GM12878 (cell line): ENCODE measurements at regions of chr14 and their contacts with region 1.

Region 1: GRCh38 chr14:41609704-41610183 is 3.1 kb downstream of the LRFN5 start:
- DNase-seq: no peak
- ATAC-seq: peak; percentile 56
- H3K4me3 ChIP-seq: no peak overlapping the region
- H3K27ac ChIP-seq: no peak overlapping the region
- H3K4me1 ChIP-seq: no peaks in the 10 kb centered on the region
- H3K27me3 ChIP-seq: peaks cover 10 to 13% of the 10 kb centered on the region in 2 experiments
- CTCF ChIP-seq: peak in 1 of 3 experiments; percentile 5; a peak in 1 of 6 replicates
- EP300 ChIP-seq: no peak
- POLR2A ChIP-seq: no peak
- RAD21 ChIP-seq: no peak

Region 2: GRCh38 chr14:39988939-39989338 is 1620.8 kb before region 1 on chr14:
- CTCF ChIA-PET with region 1: no interaction called
- POLR2A ChIA-PET with region 1: no interaction called
- RAD21 ChIA-PET with region 1: no interaction called
- SMC1A ChIA-PET with region 1: no interaction called
- in situ Hi-C with region 1: loop called (anchors 25 kb)
- intact Hi-C with region 1: no loop called
- DNase-seq: no peak
- ATAC-seq: peak; percentile 61; the same call in 2 of the 3 replicates
- H3K4me3 ChIP-seq: no peak overlapping the region
- H3K27ac ChIP-seq: no peak overlapping the region
- H3K4me1 ChIP-seq: no peaks in the 10 kb centered on the region
- H3K27me3 ChIP-seq: no peaks in the 10 kb centered on the region
- CTCF ChIP-seq: peak; percentile 24 to 62 (median 31); a peak in 4 of 6 replicates
- EP300 ChIP-seq: no peak
- POLR2A ChIP-seq: no peak
- RAD21 ChIP-seq: peak; percentile 92

Region 3: GRCh38 chr14:41285186-41285748 is 324.5 kb before region 1 on chr14:
- CTCF ChIA-PET with region 1: no interaction called
- POLR2A ChIA-PET with region 1: no interaction called
- RAD21 ChIA-PET with region 1: no interaction called
- SMC1A ChIA-PET with region 1: no interaction called
- in situ Hi-C with region 1: no loop called
- intact Hi-C with region 1: loop called (anchors 10 kb)
- DNase-seq: no peak
- ATAC-seq: no peak
- H3K4me3 ChIP-seq: no peak overlapping the region
- H3K27ac ChIP-seq: no peak overlapping the region
- H3K4me1 ChIP-seq: no peaks in the 10 kb centered on the region
- H3K27me3 ChIP-seq: no peaks in the 10 kb centered on the region
- CTCF ChIP-seq: no peak
- EP300 ChIP-seq: no peak
- POLR2A ChIP-seq: no peak
- RAD21 ChIP-seq: no peak